Activated B cell treated with CpG ODN at 0.5 μM for 24 hours (primary cell): ENCODE measurements at regions of chr10 and their contacts with region 1.

Region 1: DNA sequence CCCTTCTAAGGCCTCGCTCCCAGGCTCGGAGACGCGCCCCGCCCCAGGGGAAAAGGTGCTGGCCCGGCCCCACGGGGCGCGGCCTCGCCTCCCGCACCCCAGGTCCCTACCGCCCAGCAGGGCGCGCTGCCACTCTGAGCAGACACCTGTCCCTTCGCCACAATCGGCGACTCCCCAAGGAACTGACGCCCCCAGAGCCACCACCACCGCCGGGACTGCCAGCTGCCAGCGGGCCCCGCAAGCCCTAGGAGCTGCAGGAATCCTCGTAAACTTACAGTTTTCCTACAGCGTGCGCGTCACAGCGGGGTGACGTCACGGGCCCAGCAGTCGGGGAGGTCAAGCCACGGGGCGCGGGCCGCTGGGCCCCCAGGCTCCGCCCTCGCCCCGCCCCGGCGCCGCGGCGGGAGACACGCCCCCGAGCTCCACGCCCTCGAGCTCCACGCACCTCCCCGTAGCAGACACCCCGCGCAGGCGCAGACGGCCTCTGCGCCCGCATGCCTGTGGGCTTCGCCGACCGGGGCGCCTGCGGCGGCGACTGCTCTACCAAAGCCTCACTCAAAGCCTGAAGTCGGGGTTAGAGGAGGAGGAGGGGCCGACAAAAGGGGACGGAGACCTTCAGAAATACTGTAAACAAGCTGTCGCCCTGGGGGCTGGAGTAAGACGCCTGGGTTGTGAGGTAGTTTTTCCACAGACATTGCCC is at the start of gene ZNF438:
- DNase-seq: peak; percentile 98
- ATAC-seq: peak; percentile 84
- H3K4me3 Mint-ChIP-seq: peak within 1 kb of the TSS; percentile 89
- H3K27ac Mint-ChIP-seq: peak within 1 kb of the TSS; percentile 97
- H3K4me1 Mint-ChIP-seq: peaks cover 14% of the 10 kb centered on the region
- H3K27me3 Mint-ChIP-seq: no peaks in the 10 kb centered on the region
- CTCF ChIP-seq: no peak
- total RNA-seq, gene ZNF438: 2.9 and 3.9 TPM in 2 replicates

Region 2: GRCh38 chr10:30783939-30784500 is 247.7 kb before region 1 on chr10:
- CTCF ChIA-PET with region 1: interaction called, 3 read pairs
- POLR2A ChIA-PET with region 1: interaction called, 11 read pairs
- intact Hi-C with region 1: loop called (anchors 1 kb)
- DNase-seq: peak; percentile 61
- ATAC-seq: peak; percentile 86
- H3K4me3 Mint-ChIP-seq: peak overlapping the region; percentile 81
- H3K27ac Mint-ChIP-seq: no peak overlapping the region
- H3K4me1 Mint-ChIP-seq: peaks cover 11% of the 10 kb centered on the region
- H3K27me3 Mint-ChIP-seq: peaks cover 14% of the 10 kb centered on the region
- CTCF ChIP-seq: peak; percentile 60

Region 3: GRCh38 chr10:31055573-31056251 is 24.0 kb after region 1 on chr10:
- CTCF ChIA-PET with region 1: no interaction called
- POLR2A ChIA-PET with region 1: no interaction called
- intact Hi-C with region 1: no loop called
- DNase-seq: no peak
- ATAC-seq: no peak
- H3K4me3 Mint-ChIP-seq: no peak overlapping the region
- H3K27ac Mint-ChIP-seq: no peak overlapping the region
- H3K4me1 Mint-ChIP-seq: no peaks in the 10 kb centered on the region
- H3K27me3 Mint-ChIP-seq: peaks cover 2% of the 10 kb centered on the region
- CTCF ChIP-seq: no peak

Region 4: DNA sequence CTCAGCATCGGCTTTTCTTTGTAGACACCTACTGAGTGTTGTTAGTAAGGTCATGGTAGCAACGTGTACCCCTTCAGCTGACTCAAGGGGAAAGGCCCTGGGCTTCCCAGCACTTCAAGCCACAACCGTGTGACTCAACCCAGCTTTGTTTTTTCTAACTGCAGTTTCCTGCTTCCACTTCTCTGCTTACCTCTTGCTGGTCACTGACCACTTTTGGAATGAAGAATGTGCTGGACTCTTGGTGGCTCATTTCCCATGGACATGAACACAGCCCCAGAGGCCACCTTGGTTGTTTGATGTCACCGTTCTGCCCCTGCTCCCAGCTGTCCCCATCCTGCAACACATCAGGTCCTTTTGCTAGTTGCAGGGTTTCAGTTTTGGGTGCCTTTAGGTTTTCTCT is 69.4 kb after region 1 on chr10:
- CTCF ChIA-PET with region 1: no interaction called
- POLR2A ChIA-PET with region 1: interaction called, 7 read pairs
- intact Hi-C with region 1: loop called (anchors 2 kb)
- DNase-seq: no peak
- ATAC-seq: peak; percentile 91
- H3K4me3 Mint-ChIP-seq: no peak overlapping the region
- H3K27ac Mint-ChIP-seq: peak overlapping the region; percentile 59
- H3K4me1 Mint-ChIP-seq: peaks cover 21% of the 10 kb centered on the region
- H3K27me3 Mint-ChIP-seq: peaks cover 2% of the 10 kb centered on the region
- CTCF ChIP-seq: no peak

Region 5: GRCh38 chr10:31490858-31491504 is 459.3 kb after region 1 on chr10:
- CTCF ChIA-PET with region 1: interaction called, 5 read pairs
- POLR2A ChIA-PET with region 1: interaction called, 3 read pairs
- intact Hi-C with region 1: loop called (anchors 1 kb)
- DNase-seq: no peak
- ATAC-seq: peak; percentile 45
- H3K4me3 Mint-ChIP-seq: no peak overlapping the region
- H3K27ac Mint-ChIP-seq: no peak overlapping the region
- H3K4me1 Mint-ChIP-seq: no peaks in the 10 kb centered on the region
- H3K27me3 Mint-ChIP-seq: no peaks in the 10 kb centered on the region
- CTCF ChIP-seq: no peak

Region 6: DNA sequence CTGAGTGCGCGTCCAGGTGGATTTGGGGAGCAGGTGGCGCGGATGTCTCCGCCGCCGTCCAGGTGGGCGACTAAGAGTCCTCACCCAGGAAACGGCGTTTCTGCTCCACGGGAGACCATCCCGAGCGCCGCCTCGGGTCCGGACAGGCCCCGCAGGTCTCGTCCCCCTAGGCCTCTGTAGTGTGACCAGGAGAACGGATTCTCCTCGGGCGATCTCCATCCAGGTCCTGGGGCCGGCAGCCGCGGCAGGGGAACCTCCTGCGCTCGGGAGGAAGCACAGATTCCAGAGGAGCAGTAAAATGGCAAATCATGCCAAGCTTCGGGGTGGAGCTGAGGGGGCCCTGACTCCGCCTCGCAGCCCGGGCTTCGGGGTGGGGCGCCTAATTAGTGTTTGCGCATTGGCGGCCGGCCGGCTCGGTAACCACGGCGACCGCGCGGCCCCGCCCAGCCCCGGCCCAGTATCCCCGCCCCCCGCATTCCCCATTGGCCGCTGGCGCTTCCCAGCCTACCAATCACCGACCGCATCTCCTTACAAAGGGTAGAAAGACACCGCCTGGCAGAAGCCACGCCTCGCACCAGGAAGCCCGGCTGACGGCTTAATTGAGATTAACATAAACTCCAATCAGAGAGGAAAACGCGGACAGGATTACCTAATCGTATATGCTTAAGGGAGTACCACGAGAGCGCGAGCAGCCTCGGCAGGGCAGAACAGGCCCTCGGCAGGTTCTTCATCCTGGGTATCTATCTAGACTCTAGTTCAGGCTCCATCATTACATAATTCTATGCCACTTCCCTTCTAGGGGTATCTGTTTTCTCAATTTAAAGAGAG is 728.3 kb after region 1 on chr10:
- CTCF ChIA-PET with region 1: interaction called, 3 read pairs
- POLR2A ChIA-PET with region 1: interaction called, 15 read pairs
- intact Hi-C with region 1: loop called (anchors 1 kb)
- DNase-seq: peak; percentile 85
- ATAC-seq: peak; percentile 94
- H3K4me3 Mint-ChIP-seq: peak overlapping the region; percentile 85
- H3K27ac Mint-ChIP-seq: peak overlapping the region; percentile 91
- H3K4me1 Mint-ChIP-seq: peaks cover 13% of the 10 kb centered on the region
- H3K27me3 Mint-ChIP-seq: no peaks in the 10 kb centered on the region
- CTCF ChIP-seq: no peak

Region 7: GRCh38 chr10:32055813-32056600 is 1024.3 kb after region 1 on chr10 and contains the start of gene KIF5B:
- CTCF ChIA-PET with region 1: no interaction called
- POLR2A ChIA-PET with region 1: no interaction called
- intact Hi-C with region 1: loop called (anchors 5 kb)
- DNase-seq: peak; percentile 90
- ATAC-seq: peak; percentile 86
- H3K4me3 Mint-ChIP-seq: peak within 1 kb of the TSS; percentile 96
- H3K27ac Mint-ChIP-seq: peak within 1 kb of the TSS; percentile 90
- H3K4me1 Mint-ChIP-seq: peaks cover 56% of the 10 kb centered on the region
- H3K27me3 Mint-ChIP-seq: no peaks in the 10 kb centered on the region
- CTCF ChIP-seq: no peak
- total RNA-seq, gene KIF5B: 44.2 and 45.0 TPM in 2 replicates